ENCODE measurements at regions of chr6 and their contacts with region 1.

Region 1: GRCh38 chr6:138773177-138774091 is at the start of gene CCDC28A:
- DNase-seq: peak; percentile 96 to 97
- H3K4me3 ChIP-seq: peak within 1 kb of the TSS; percentile 67 to 96
- H3K27ac ChIP-seq: peak within 1 kb of the TSS; percentile 88 to 98
- H3K4me1 ChIP-seq: peaks cover 0 to 18% (median 12%) of the 10 kb centered on the region in 4 donors
- H3K27me3 ChIP-seq: no peaks in the 10 kb centered on the region
- CTCF ChIP-seq: peak; percentile 15 to 27

Region 2: DNA sequence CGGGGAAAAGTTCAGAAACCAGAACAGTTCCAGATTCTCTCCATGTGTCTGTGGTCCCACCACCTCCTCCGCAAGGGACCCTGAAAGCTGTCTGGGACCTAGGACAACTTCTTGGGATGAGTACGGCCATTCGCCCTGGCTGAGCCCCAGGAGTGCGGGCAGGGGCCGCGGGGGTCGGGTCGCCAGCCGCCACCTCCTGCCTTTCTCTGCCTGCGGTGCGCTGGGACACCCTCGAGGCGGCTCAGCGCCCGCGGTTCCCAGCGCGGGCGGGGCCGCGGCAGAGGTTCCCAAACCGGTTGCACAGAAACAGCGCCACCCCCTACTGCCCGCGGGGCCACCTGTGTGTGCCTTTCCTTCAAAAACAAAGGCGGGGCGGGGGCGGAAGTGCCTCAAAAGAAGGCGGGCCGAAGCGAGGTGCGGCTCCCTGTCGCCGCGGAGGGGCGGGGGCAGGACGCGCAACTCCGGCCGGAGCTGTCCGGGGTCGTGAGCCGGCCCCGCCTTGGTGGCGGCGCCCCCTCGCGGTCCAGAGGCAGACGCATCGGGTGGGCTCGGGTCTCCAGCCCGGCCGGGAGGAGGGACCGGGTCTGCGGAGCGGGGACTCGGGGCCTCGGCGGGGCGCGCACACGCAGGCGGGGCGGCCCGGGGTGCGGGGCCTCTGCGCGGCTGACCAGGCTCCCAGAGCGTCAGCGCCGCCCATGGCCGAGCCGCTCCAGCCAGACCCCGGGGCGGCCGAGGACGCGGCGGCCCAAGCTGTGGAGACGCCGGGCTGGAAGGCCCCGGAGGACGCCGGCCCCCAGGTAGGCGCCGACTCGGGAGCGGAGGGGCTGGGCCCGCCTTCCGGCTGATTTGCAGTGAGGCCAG is 369.4 kb before region 1 on chr6 and contains the start of gene HEBP2:
- intact Hi-C with region 1: loop called (anchors 5 kb)
- DNase-seq: peak; percentile 94 to 95
- H3K4me3 ChIP-seq: peak within 1 kb of the TSS; percentile 75 to 86
- H3K27ac ChIP-seq: peak within 1 kb of the TSS; percentile 91 to 97
- H3K4me1 ChIP-seq: peaks cover 0 to 15% (median 9%) of the 10 kb centered on the region in 4 donors
- H3K27me3 ChIP-seq: no peaks in the 10 kb centered on the region
- CTCF ChIP-seq: peak; percentile 40 to 45

Region 3: GRCh38 chr6:138814179-138814834 is 40.9 kb after region 1 on chr6:
- intact Hi-C with region 1: no loop called
- DNase-seq: no peak
- H3K4me3 ChIP-seq: no peak overlapping the region
- H3K27ac ChIP-seq: no peak overlapping the region
- H3K4me1 ChIP-seq: no peaks in the 10 kb centered on the region
- H3K27me3 ChIP-seq: no peaks in the 10 kb centered on the region
- CTCF ChIP-seq: no peak

Region 4: DNA sequence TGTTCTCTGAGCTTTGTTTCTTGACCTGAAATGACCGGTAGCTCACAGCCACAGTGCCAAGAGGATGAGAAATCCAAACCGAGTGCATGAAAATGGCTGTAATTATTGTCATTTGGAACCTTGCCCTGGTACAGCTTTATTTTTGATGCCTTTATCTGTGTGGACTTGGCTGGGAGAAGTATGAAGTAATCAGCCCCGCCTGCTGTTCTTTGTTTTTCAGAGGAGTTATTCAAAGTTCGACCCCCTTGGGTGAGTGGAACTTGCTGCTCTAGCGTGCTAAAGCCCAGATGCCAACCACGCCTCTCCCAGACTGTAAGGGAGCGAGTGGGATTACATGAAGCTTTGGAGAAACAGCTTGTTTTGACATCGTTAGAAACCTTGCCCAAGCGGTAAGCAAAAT is 70.8 kb after region 1 on chr6:
- intact Hi-C with region 1: no loop called
- DNase-seq: peak in 1 of 2 donors; percentile 67
- H3K4me3 ChIP-seq: no peak overlapping the region
- H3K27ac ChIP-seq: no peak overlapping the region
- H3K4me1 ChIP-seq: no peaks in the 10 kb centered on the region
- H3K27me3 ChIP-seq: no peaks in the 10 kb centered on the region
- CTCF ChIP-seq: no peak

Region 5: GRCh38 chr6:139278190-139278589 is 504.8 kb after region 1 on chr6:
- intact Hi-C with region 1: no loop called
- DNase-seq: no peak
- H3K4me3 ChIP-seq: no peak overlapping the region
- H3K27ac ChIP-seq: peak overlapping the region in 1 of 2 donors; percentile 46
- H3K4me1 ChIP-seq: peaks cover 0 to 7% (median 3%) of the 10 kb centered on the region in 4 donors
- H3K27me3 ChIP-seq: no peaks in the 10 kb centered on the region
- CTCF ChIP-seq: no peak

Measured in tibial artery (tissue), 4 donors.